ENCODE measurements at regions of chr11 and their contacts with region 1.

Region 1: DNA sequence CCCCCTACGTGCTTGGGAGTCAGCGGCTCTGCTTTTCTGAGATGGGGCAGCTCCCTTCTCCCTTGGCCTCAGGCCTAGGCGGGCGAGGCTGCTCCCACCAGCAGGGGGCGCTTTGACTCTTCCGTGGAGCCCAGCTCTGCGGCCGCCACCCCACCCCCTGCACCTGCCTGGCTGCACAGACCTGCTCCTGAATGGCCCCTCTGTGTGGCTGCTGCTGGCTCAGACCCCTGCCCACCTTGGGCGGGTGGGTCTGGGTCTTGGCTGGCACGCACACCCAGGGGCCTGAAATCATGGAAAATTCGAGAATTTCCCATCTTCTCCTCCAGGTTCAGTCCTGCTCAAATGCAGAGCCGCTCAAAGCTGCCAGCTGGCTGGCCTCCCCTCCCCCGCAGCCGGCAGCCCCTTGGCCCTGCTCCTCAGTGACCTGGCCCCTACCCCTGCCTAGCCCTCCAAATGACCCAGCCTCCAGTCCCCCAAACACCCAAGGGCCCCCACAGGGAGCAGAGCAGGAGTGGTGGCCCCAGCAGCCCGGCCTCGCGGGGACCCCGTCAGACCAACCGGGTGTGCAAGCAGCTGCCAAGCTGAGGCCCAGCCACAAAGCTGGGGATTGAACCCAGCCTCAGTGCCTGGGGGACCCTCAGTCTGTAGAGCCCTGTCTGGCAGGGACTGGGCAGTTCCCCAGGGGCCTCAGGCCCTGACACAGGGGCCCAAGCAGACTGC is 9.0 kb downstream of the PRR33 start:
- DNase-seq: peak; percentile 43
- ATAC-seq: peak; percentile 99
- H3K4me3 ChIP-seq: no peak overlapping the region
- H3K27ac ChIP-seq: no peak overlapping the region
- H3K4me1 ChIP-seq: no peaks in the 10 kb centered on the region
- H3K27me3 ChIP-seq: peaks cover 4% of the 10 kb centered on the region; the same call in 1 of the 2 replicates
- CTCF ChIP-seq: peak; percentile 88 to 92 (median 91)
- POLR2A ChIP-seq: no peak
- RAD21 ChIP-seq: peak; percentile 95

Region 2: GRCh38 chr11:1917671-1918516 is 35.2 kb after region 1 on chr11:
- CTCF ChIA-PET with region 1: interaction called, 12 read pairs
- POLR2A ChIA-PET with region 1: no interaction called
- RAD21 ChIA-PET with region 1: no interaction called
- intact Hi-C with region 1: loop called (anchors 5 kb)
- DNase-seq: no peak
- ATAC-seq: peak; percentile 71
- H3K4me3 ChIP-seq: no peak overlapping the region
- H3K27ac ChIP-seq: no peak overlapping the region
- H3K4me1 ChIP-seq: no peaks in the 10 kb centered on the region
- H3K27me3 ChIP-seq: no peaks in the 10 kb centered on the region
- CTCF ChIP-seq: peak; percentile 26 to 65 (median 55); a peak in 5 of 6 replicates
- POLR2A ChIP-seq: no peak
- RAD21 ChIP-seq: peak; percentile 26; the same call in 1 of the 2 replicates

Region 3: DNA sequence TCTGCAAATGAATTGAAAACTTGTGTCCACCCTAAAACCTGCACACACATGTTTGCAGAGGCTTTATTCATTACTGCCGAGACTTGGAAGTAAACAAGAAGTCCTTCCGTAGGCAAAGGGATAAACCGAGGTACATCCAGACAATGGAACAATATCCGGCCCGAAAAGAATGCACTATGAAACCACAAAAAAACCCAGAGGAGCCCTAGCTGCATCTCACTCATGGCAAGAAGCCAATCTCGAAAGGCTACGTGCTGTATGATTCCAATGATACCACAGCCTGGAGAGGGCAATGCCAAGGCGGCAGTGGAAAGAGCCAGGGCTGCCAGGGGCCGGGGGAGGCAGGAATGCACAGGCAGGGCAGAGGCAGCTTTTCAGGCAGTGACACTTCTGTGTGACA is 61.3 kb after region 1 on chr11:
- CTCF ChIA-PET with region 1: interaction called, 12 read pairs
- POLR2A ChIA-PET with region 1: no interaction called
- RAD21 ChIA-PET with region 1: no interaction called
- intact Hi-C with region 1: no loop called
- DNase-seq: no peak
- ATAC-seq: no peak
- H3K4me3 ChIP-seq: no peak overlapping the region
- H3K27ac ChIP-seq: no peak overlapping the region
- H3K4me1 ChIP-seq: peaks cover 0 to 9% of the 10 kb centered on the region in 2 experiments; a peak in 1 of 4 replicates
- H3K27me3 ChIP-seq: no peaks in the 10 kb centered on the region
- CTCF ChIP-seq: no peak
- POLR2A ChIP-seq: no peak
- RAD21 ChIP-seq: no peak

Region 4: GRCh38 chr11:2002042-2002776 is 119.5 kb after region 1 on chr11:
- CTCF ChIA-PET with region 1: interaction called, 12 read pairs
- POLR2A ChIA-PET with region 1: no interaction called
- RAD21 ChIA-PET with region 1: interaction called, 5 read pairs
- intact Hi-C with region 1: no loop called
- DNase-seq: no peak
- ATAC-seq: no peak
- H3K4me3 ChIP-seq: no peak overlapping the region
- H3K27ac ChIP-seq: no peak overlapping the region
- H3K4me1 ChIP-seq: no peaks in the 10 kb centered on the region
- H3K27me3 ChIP-seq: no peaks in the 10 kb centered on the region
- CTCF ChIP-seq: no peak
- POLR2A ChIP-seq: no peak
- RAD21 ChIP-seq: no peak

Region 5: GRCh38 chr11:2089536-2090165 is 207.0 kb after region 1 on chr11:
- CTCF ChIA-PET with region 1: no interaction called
- POLR2A ChIA-PET with region 1: no interaction called
- RAD21 ChIA-PET with region 1: no interaction called
- intact Hi-C with region 1: no loop called
- DNase-seq: peak; percentile 73
- ATAC-seq: peak; percentile 100
- H3K4me3 ChIP-seq: no peak overlapping the region
- H3K27ac ChIP-seq: no peak overlapping the region
- H3K4me1 ChIP-seq: peaks cover 4 to 19% of the 10 kb centered on the region in 2 experiments; a peak in 2 of 4 replicates
- H3K27me3 ChIP-seq: no peaks in the 10 kb centered on the region
- CTCF ChIP-seq: no peak
- POLR2A ChIP-seq: no peak
- RAD21 ChIP-seq: no peak

Measured in HCT116 (cell line).